ENCODE measurements at regions of chr14 and their contacts with region 1.

Region 1: DNA sequence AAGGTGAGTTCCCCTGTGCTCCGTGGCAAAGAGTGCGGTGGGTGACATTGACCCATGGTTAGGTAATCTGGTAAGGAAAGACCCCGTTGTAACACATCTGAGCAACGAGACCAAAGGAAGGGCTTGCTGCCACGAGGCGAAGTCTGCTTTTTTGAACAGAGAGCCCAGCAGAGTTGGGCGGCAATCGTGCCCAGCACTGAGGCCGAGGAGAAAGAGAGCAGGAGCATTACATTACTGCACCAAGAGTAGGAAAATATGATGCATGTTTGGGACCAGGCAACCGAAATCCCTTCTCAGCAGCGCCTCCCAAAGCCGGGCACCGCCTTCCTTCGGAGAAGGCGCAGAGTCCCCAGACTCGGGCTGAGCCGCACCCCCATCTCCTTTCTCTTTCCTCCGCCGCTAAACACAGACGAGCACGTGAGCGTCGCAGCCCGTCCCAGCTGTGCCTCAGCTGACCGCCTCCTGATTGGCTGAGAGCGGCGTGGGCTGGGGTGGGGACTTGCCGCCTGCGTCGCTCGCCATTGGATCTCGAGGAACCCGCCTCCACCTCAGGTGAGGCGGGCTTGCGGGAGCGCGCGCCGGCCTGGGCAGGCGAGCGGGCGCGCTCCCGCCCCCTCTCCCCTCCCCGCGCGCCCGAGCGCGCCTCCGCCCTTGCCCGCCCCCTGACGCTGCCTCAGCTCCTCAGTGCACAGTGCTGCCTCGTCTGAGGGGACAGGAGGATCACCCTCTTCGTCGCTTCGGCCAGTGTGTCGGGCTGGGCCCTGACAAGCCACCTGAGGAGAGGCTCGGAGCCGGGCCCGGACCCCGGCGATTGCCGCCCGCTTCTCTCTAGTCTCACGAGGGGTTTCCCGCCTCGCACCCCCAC is at the start of gene HIF1A:
- DNase-seq: peak; percentile 87
- ATAC-seq: peak; percentile 95
- H3K4me3 Mint-ChIP-seq: peak within 1 kb of the TSS; percentile 97
- H3K27ac Mint-ChIP-seq: peak within 1 kb of the TSS; percentile 95
- H3K4me1 Mint-ChIP-seq: peaks cover 40% of the 10 kb centered on the region
- H3K27me3 Mint-ChIP-seq: no peaks in the 10 kb centered on the region
- CTCF ChIP-seq: no peak
- total RNA-seq, gene HIF1A: 148 and 179 TPM in 2 replicates

Region 2: GRCh38 chr14:61475316-61475715 is 219.7 kb before region 1 on chr14:
- CTCF ChIA-PET with region 1: interaction called, 3 read pairs
- POLR2A ChIA-PET with region 1: interaction called, 80 read pairs
- intact Hi-C with region 1: loop called (anchors 1 kb)
- DNase-seq: no peak
- ATAC-seq: no peak
- H3K4me3 Mint-ChIP-seq: peak overlapping the region; percentile 19
- H3K27ac Mint-ChIP-seq: peak overlapping the region; percentile 77
- H3K4me1 Mint-ChIP-seq: peaks cover 96% of the 10 kb centered on the region
- H3K27me3 Mint-ChIP-seq: no peaks in the 10 kb centered on the region
- CTCF ChIP-seq: no peak

Region 3: GRCh38 chr14:61568572-61569131 is 126.4 kb before region 1 on chr14:
- CTCF ChIA-PET with region 1: no interaction called
- POLR2A ChIA-PET with region 1: interaction called, 21 read pairs
- intact Hi-C with region 1: loop called (anchors 1 kb)
- DNase-seq: peak; percentile 74
- ATAC-seq: peak; percentile 89
- H3K4me3 Mint-ChIP-seq: peak overlapping the region; percentile 83
- H3K27ac Mint-ChIP-seq: peak overlapping the region; percentile 80
- H3K4me1 Mint-ChIP-seq: peaks cover 58% of the 10 kb centered on the region
- H3K27me3 Mint-ChIP-seq: no peaks in the 10 kb centered on the region
- CTCF ChIP-seq: no peak

Region 4: GRCh38 chr14:61662437-61663311 is 32.4 kb before region 1 on chr14:
- CTCF ChIA-PET with region 1: no interaction called
- POLR2A ChIA-PET with region 1: interaction called, 81 read pairs
- intact Hi-C with region 1: loop called (anchors 1 kb)
- DNase-seq: peak; percentile 26
- ATAC-seq: peak; percentile 78
- H3K4me3 Mint-ChIP-seq: peak overlapping the region; percentile 78
- H3K27ac Mint-ChIP-seq: peak overlapping the region; percentile 91
- H3K4me1 Mint-ChIP-seq: peaks cover 57% of the 10 kb centered on the region
- H3K27me3 Mint-ChIP-seq: no peaks in the 10 kb centered on the region
- CTCF ChIP-seq: no peak

Region 5: DNA sequence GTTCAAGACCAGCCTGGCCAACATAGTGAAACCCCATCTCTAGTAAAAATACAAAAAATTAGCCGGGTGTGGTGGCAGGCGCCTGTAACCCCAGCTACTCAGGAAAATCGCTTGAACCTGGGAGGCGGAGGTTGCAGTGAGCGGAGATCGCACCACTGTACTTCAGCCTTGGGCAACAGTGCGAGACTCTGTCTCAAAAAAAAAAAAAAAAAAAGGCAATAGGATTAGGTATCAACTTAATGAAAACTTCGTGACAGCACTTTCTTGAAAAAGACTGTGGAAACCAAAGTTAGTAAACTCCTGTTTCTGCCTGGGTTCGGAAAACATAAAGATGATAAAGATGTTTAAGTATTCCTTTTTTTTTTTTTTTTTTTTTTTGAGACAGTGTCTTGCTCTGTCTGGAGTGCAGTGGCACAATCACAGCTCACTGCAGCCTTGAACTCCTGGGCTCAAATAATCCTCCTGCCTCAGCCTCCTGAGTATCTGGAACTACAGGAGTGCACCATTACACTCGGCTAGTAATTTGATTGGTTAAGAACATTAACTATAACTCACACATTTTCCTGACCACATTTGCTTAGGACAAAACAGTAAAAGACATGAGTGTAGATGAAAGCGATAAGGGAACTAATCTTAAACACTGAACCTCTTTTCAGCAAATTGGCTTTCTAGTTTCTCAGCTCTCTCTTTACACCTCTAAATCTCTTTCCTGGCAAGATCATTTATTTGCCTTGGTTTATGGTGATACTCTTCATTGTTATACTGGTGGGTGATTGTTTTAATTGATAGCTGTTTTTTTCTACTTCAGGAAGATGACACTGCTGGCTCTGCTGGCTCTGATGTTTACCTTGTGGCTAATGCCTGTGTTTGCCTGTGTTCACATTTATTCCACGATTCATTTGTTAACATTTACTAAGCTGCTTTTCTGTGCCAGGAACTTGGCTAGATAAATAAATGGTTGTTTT is 16.1 kb after region 1 on chr14:
- CTCF ChIA-PET with region 1: no interaction called
- POLR2A ChIA-PET with region 1: interaction called, 55 read pairs
- intact Hi-C with region 1: loop called (anchors 1 kb)
- DNase-seq: no peak
- ATAC-seq: peak; percentile 72
- H3K4me3 Mint-ChIP-seq: peak overlapping the region; percentile 69
- H3K27ac Mint-ChIP-seq: peak overlapping the region; percentile 57
- H3K4me1 Mint-ChIP-seq: peaks cover 83% of the 10 kb centered on the region
- H3K27me3 Mint-ChIP-seq: no peaks in the 10 kb centered on the region
- CTCF ChIP-seq: no peak

Region 6: GRCh38 chr14:61750708-61751474 is 55.8 kb after region 1 on chr14:
- CTCF ChIA-PET with region 1: no interaction called
- POLR2A ChIA-PET with region 1: interaction called, 8 read pairs
- intact Hi-C with region 1: loop called (anchors 2 kb)
- DNase-seq: peak; percentile 81
- ATAC-seq: peak; percentile 95
- H3K4me3 Mint-ChIP-seq: peak overlapping the region; percentile 87
- H3K27ac Mint-ChIP-seq: peak overlapping the region; percentile 90
- H3K4me1 Mint-ChIP-seq: peaks cover 41% of the 10 kb centered on the region
- H3K27me3 Mint-ChIP-seq: no peaks in the 10 kb centered on the region
- CTCF ChIP-seq: no peak